Breast epithelium (tissue), 4 donors: ENCODE measurements at regions of chr3 and their contacts with region 1.

Region 1: GRCh38 chr3:64708454-64708853 is 20.7 kb upstream of the ADAMTS9 start:
- DNase-seq: no peak
- H3K4me3 ChIP-seq: no peak overlapping the region
- H3K27ac ChIP-seq: no peak overlapping the region
- H3K4me1 ChIP-seq: no peaks in the 10 kb centered on the region
- H3K27me3 ChIP-seq: no peaks in the 10 kb centered on the region
- CTCF ChIP-seq: no peak
- POLR2A ChIP-seq: no peak

Region 2: GRCh38 chr3:63896332-63897030 is 812.0 kb before region 1 on chr3:
- intact Hi-C with region 1: no loop called
- DNase-seq: no peak
- H3K4me3 ChIP-seq: no peak overlapping the region
- H3K27ac ChIP-seq: no peak overlapping the region
- H3K4me1 ChIP-seq: peaks cover 4 to 5% of the 10 kb centered on the region in 2 donors
- H3K27me3 ChIP-seq: no peaks in the 10 kb centered on the region
- CTCF ChIP-seq: no peak
- POLR2A ChIP-seq: no peak

Region 3: GRCh38 chr3:64039981-64040733 is 668.3 kb before region 1 on chr3:
- intact Hi-C with region 1: no loop called
- DNase-seq: no peak
- H3K4me3 ChIP-seq: no peak overlapping the region
- H3K27ac ChIP-seq: no peak overlapping the region
- H3K4me1 ChIP-seq: no peaks in the 10 kb centered on the region
- H3K27me3 ChIP-seq: no peaks in the 10 kb centered on the region
- CTCF ChIP-seq: no peak
- POLR2A ChIP-seq: no peak

Region 4: DNA sequence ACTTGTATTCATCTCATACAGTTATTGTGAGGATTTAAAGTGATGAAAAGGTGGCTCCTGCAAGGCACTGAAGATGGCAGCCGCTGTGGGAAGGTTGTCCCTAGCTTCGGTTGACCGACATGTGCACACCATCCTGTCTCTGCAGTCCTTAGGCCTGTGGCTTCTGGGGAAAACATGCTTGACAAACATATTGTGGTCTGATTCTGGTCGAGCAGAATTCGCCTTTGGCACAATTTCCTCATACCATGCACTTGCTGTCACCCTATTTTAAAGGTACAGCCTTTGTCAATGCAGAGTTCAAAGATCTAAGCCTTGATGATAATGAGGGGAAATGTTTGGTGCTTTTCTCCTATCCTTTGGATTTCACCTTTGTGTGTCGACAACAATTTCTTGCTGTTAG is 534.1 kb before region 1 on chr3:
- intact Hi-C with region 1: loop called (anchors 5 kb)
- DNase-seq: peak in 1 of 2 donors; percentile 62
- H3K4me3 ChIP-seq: no peak overlapping the region
- H3K27ac ChIP-seq: peak overlapping the region in 1 of 2 donors; percentile 46
- H3K4me1 ChIP-seq: no peaks in the 10 kb centered on the region
- H3K27me3 ChIP-seq: no peaks in the 10 kb centered on the region
- CTCF ChIP-seq: no peak
- POLR2A ChIP-seq: no peak